A549 (cell line): ENCODE measurements at regions of chr10 and their contacts with region 1.

Region 1: GRCh38 chr10:80382989-80383388 is 25.4 kb upstream of the PRXL2A start:
- DNase-seq: peak; percentile 36 to 46
- ATAC-seq: peak; percentile 63 to 70; a peak in 3 of 6 replicates
- H3K4me3 ChIP-seq: no peak overlapping the region
- H3K27ac ChIP-seq: peak overlapping the region in 1 of 2 experiments; percentile 46; a peak in 1 of 6 replicates
- H3K4me1 ChIP-seq: no peaks in the 10 kb centered on the region
- CTCF ChIP-seq: peak; percentile 86
- EP300 ChIP-seq: no peak
- POLR2A ChIP-seq: no peak
- RAD21 ChIP-seq: peak; percentile 85 to 90

Region 2: GRCh38 chr10:80408242-80409101 is 25.5 kb after region 1 on chr10 and contains the start of gene PRXL2A:
- CTCF ChIA-PET with region 1: interaction called, 15 read pairs
- POLR2A ChIA-PET with region 1: no interaction called
- DNase-seq: peak; percentile 78 to 92
- ATAC-seq: peak; percentile 95 to 97
- H3K4me3 ChIP-seq: peak within 1 kb of the TSS; percentile 73
- H3K27ac ChIP-seq: peak within 1 kb of the TSS; percentile 83 to 90
- H3K4me1 ChIP-seq: peaks cover 27% of the 10 kb centered on the region; the same call in 2 of the 3 replicates
- CTCF ChIP-seq: no peak
- EP300 ChIP-seq: no peak
- POLR2A ChIP-seq: peak; percentile 71
- RAD21 ChIP-seq: no peak
- polyA plus RNA-seq, gene PRXL2A: 47.6 and 59.3 TPM in 2 replicates

Region 3: GRCh38 chr10:80453701-80454513 is 70.9 kb after region 1 on chr10 and contains the start of gene TSPAN14:
- CTCF ChIA-PET with region 1: interaction called, 11 read pairs
- POLR2A ChIA-PET with region 1: no interaction called
- DNase-seq: peak; percentile 72 to 79
- ATAC-seq: peak; percentile 82 to 89
- H3K4me3 ChIP-seq: peak within 1 kb of the TSS; percentile 98
- H3K27ac ChIP-seq: peak within 1 kb of the TSS; percentile 99 to 100
- H3K4me1 ChIP-seq: peaks cover 55% of the 10 kb centered on the region
- CTCF ChIP-seq: no peak; the same call in 1 of the 3 replicates
- EP300 ChIP-seq: no peak
- POLR2A ChIP-seq: peak; percentile 86
- RAD21 ChIP-seq: no peak
- polyA plus RNA-seq, gene TSPAN14: 87.0 and 97.1 TPM in 2 replicates

Region 4: GRCh38 chr10:80924063-80924952 is 541.3 kb after region 1 on chr10:
- CTCF ChIA-PET with region 1: interaction called, 12 read pairs
- POLR2A ChIA-PET with region 1: no interaction called
- DNase-seq: peak; percentile 7 to 51
- ATAC-seq: peak; percentile 78 to 90; a peak in 4 of 6 replicates
- H3K4me3 ChIP-seq: no peak overlapping the region
- H3K27ac ChIP-seq: no peak overlapping the region
- H3K4me1 ChIP-seq: no peaks in the 10 kb centered on the region
- CTCF ChIP-seq: peak; percentile 76
- EP300 ChIP-seq: no peak
- POLR2A ChIP-seq: no peak
- RAD21 ChIP-seq: peak; percentile 51 to 58; a peak in 4 of 5 replicates